Activated CD4-positive, alpha-beta T cell treated with anti-CD3 and anti-CD28 coated beads for 36 hours (primary cell): ENCODE measurements at regions of chr9 and their contacts with region 1.

Region 1: GRCh38 chr9:100322954-100323536 is 29.7 kb downstream of the TEX10 start:
- DNase-seq: peak; percentile 49
- ATAC-seq: no peak
- H3K4me3 Mint-ChIP-seq: no peak overlapping the region
- H3K27ac Mint-ChIP-seq: no peak overlapping the region
- H3K4me1 Mint-ChIP-seq: peaks cover 13% of the 10 kb centered on the region
- H3K27me3 Mint-ChIP-seq: no peaks in the 10 kb centered on the region

Region 2: GRCh38 chr9:99162759-99163364 is 1160.2 kb before region 1 on chr9:
- CTCF ChIA-PET with region 1: interaction called, 6 read pairs
- POLR2A ChIA-PET with region 1: no interaction called
- intact Hi-C with region 1: loop called in 1 of 2 experiments (anchors 5 kb)
- DNase-seq: no peak
- ATAC-seq: peak; percentile 35
- H3K4me3 Mint-ChIP-seq: no peak overlapping the region
- H3K27ac Mint-ChIP-seq: no peak overlapping the region
- H3K4me1 Mint-ChIP-seq: peaks cover 22% of the 10 kb centered on the region
- H3K27me3 Mint-ChIP-seq: peaks cover 8% of the 10 kb centered on the region

Region 3: DNA sequence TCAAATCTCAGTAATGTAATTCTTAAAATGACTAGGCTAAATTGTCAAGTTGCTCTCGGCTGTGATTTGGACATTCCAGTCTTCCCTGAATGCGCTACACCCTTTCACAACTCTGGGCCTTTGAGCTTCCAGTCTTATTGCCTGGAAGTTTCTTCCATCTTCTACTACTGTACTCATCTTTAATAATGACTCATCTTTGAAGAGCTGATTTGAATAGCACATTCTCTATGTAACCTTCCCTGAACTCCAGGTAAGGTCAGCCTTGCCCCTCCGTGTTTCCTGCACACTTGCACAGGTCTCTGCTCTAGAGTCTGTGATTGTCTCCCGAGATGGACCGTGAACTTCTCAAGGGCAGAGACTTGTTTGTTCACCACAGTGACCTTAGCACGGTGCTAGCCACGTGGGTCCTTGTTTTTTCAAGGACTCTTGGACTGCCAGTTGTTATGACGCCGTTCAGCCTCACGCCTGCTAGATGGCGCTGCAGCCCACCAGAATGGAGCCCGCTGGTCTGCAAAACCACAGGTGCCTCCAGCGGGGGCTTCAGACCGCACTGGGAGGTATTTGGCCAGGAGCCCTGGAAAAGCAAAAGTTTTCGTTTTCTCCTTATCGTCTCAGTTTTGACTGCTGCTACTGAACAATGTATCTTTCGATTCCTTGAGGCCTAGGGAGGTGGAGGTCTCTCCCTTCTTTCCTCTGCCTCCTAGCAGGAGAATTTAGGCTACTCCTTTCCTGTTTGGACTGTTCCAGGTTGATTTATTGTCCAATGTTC is 1056.6 kb before region 1 on chr9:
- CTCF ChIA-PET with region 1: no interaction called
- POLR2A ChIA-PET with region 1: no interaction called
- intact Hi-C with region 1: loop called in 1 of 2 experiments (anchors 10 kb)
- DNase-seq: peak; percentile 83
- ATAC-seq: peak; percentile 85
- H3K4me3 Mint-ChIP-seq: peak overlapping the region; percentile 48
- H3K27ac Mint-ChIP-seq: peak overlapping the region; percentile 65
- H3K4me1 Mint-ChIP-seq: peaks cover 23% of the 10 kb centered on the region
- H3K27me3 Mint-ChIP-seq: peaks cover 5% of the 10 kb centered on the region

Region 4: DNA sequence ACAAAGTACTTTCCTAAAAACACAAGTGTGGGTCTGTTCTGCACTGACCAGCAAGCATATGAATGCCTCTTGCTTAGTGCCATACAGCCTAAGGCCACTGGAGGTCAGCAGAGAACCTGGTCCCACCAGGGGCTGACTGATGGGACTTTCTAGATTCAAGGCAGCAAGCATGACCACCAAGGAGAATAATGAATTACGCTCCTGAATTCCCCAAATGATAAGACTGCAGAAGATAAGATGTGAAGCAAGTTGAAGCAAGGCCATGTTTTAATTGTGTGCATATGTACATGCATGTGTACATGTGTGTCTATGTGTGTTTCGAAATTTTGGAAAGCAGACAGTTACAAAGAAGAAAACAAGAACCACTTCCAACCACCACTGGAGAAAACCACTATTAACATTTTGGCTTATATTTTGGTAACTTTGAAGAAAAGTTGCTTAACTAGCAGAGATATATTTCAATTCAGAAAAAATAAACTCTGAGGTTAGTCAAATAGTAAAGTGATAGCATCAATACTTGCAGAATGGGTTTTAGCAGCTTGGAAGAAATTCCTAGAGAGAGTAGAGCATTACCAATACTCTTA is 294.8 kb before region 1 on chr9:
- CTCF ChIA-PET with region 1: interaction called, 17 read pairs
- POLR2A ChIA-PET with region 1: no interaction called
- intact Hi-C with region 1: loop called (anchors 1 to 2 kb)
- DNase-seq: peak; percentile 82
- ATAC-seq: peak; percentile 93
- H3K4me3 Mint-ChIP-seq: no peak overlapping the region
- H3K27ac Mint-ChIP-seq: no peak overlapping the region
- H3K4me1 Mint-ChIP-seq: peaks cover 3% of the 10 kb centered on the region
- H3K27me3 Mint-ChIP-seq: no peaks in the 10 kb centered on the region

Region 5: GRCh38 chr9:100167915-100168654 is 155.0 kb before region 1 on chr9:
- CTCF ChIA-PET with region 1: no interaction called
- POLR2A ChIA-PET with region 1: no interaction called
- intact Hi-C with region 1: no loop called
- DNase-seq: no peak
- ATAC-seq: no peak
- H3K4me3 Mint-ChIP-seq: no peak overlapping the region
- H3K27ac Mint-ChIP-seq: no peak overlapping the region
- H3K4me1 Mint-ChIP-seq: no peaks in the 10 kb centered on the region
- H3K27me3 Mint-ChIP-seq: no peaks in the 10 kb centered on the region

Region 6: GRCh38 chr9:100304926-100305325 is 18.1 kb before region 1 on chr9:
- CTCF ChIA-PET with region 1: interaction called, 16 read pairs
- POLR2A ChIA-PET with region 1: no interaction called
- intact Hi-C with region 1: no loop called
- DNase-seq: no peak
- ATAC-seq: no peak
- H3K4me3 Mint-ChIP-seq: no peak overlapping the region
- H3K27ac Mint-ChIP-seq: no peak overlapping the region
- H3K4me1 Mint-ChIP-seq: peaks cover 2% of the 10 kb centered on the region
- H3K27me3 Mint-ChIP-seq: no peaks in the 10 kb centered on the region

Region 7: GRCh38 chr9:100346836-100347235 is 23.8 kb after region 1 on chr9:
- CTCF ChIA-PET with region 1: interaction called, 33 read pairs
- POLR2A ChIA-PET with region 1: no interaction called
- intact Hi-C with region 1: no loop called
- DNase-seq: no peak
- ATAC-seq: no peak
- H3K4me3 Mint-ChIP-seq: no peak overlapping the region
- H3K27ac Mint-ChIP-seq: no peak overlapping the region
- H3K4me1 Mint-ChIP-seq: peaks cover 46% of the 10 kb centered on the region
- H3K27me3 Mint-ChIP-seq: no peaks in the 10 kb centered on the region